ENCODE measurements at regions of chr17 and their contacts with region 1.

Region 1: DNA sequence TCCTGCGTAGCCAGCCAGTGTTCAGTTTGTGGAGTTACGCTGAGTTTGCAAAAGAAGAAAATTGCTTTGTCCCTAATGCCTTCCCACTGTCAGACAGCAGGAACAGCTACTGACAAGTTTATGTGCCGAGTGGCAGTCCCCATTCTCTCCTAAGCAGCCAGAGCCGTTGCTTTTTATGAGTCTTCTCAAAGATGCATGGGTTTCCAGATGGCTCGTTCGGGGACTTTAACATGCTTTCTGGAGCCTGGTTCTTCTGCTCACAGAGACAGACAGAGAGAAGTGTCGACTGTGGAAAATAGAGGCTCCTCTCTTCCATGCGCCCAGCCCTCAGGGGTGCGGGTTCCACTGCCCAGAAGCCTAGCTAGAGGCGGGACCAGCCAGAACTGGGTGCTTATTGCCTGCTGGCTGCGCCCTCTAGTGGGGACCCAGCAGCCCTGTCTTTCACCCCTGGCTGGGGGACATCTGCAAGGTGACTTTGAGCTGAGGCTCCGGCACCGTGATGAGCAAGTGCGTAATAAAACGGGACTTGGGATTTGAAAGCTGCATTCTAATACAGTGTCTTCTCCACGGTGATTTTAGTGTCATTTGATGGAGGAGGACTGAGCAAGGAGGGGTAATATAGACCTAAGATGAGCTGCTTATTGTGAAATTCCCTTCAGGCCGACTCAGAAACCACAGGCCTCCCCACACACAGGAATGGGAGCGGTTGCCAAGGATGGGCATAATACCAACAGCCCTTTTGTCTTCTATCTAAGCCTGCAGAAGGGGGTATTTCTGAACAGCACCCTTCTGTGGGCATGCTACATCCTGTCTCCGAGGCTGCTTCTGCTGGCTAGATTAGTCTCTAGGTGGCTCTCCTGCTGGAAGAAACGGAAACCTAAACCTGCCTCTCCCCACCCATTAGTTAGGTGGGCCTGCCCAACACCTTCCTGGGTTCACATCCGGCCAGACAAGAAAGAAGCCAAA is 73.1 kb downstream of the CCDC182 start:
- DNase-seq: peak; percentile 89
- H3K4me3 Mint-ChIP-seq: no peak overlapping the region
- H3K27ac Mint-ChIP-seq: no peak overlapping the region
- H3K4me1 Mint-ChIP-seq: peaks cover 18% of the 10 kb centered on the region
- H3K27me3 Mint-ChIP-seq: no peaks in the 10 kb centered on the region

Region 2: GRCh38 chr17:57604771-57605674 is 66.9 kb before region 1 on chr17:
- intact Hi-C with region 1: loop called (anchors 2 kb)
- DNase-seq: peak; percentile 73
- H3K4me3 Mint-ChIP-seq: peak overlapping the region; percentile 67
- H3K27ac Mint-ChIP-seq: peak overlapping the region; percentile 95
- H3K4me1 Mint-ChIP-seq: peaks cover 65% of the 10 kb centered on the region
- H3K27me3 Mint-ChIP-seq: no peaks in the 10 kb centered on the region